GM12878 (cell line): ENCODE measurements at regions of chr1 and their contacts with region 1.

Region 1: GRCh38 chr1:54052934-54053744 is at the starts of genes TCEANC2 and TMEM59:
- DNase-seq: peak; percentile 99
- ATAC-seq: peak; percentile 95
- H3K4me3 ChIP-seq: peak within 1 kb of the TSS; percentile 92
- H3K27ac ChIP-seq: peak within 1 kb of the TSS; percentile 88
- H3K4me1 ChIP-seq: peaks cover 6% of the 10 kb centered on the region
- H3K27me3 ChIP-seq: no peaks in the 10 kb centered on the region
- CTCF ChIP-seq: no peak
- EP300 ChIP-seq: no peak
- POLR2A ChIP-seq: peak; percentile 75
- RAD21 ChIP-seq: no peak
- polyA plus RNA-seq, gene TCEANC2: 5.4 to 10.5 TPM
- polyA plus RNA-seq, gene TMEM59: 112 to 128 TPM

Region 2: GRCh38 chr1:53837924-53838652 is 215.1 kb before region 1 on chr1 and contains the start of gene NDC1:
- CTCF ChIA-PET with region 1: no interaction called
- POLR2A ChIA-PET with region 1: interaction called, 8 read pairs
- RAD21 ChIA-PET with region 1: no interaction called
- SMC1A ChIA-PET with region 1: interaction called, 4 read pairs
- in situ Hi-C with region 1: no loop called
- intact Hi-C with region 1: loop called (anchors 5 kb)
- DNase-seq: peak; percentile 91
- ATAC-seq: peak; percentile 92
- H3K4me3 ChIP-seq: peak within 1 kb of the TSS; percentile 88
- H3K27ac ChIP-seq: peak within 1 kb of the TSS; percentile 99
- H3K4me1 ChIP-seq: peaks cover 7% of the 10 kb centered on the region; the same call in 1 of the 2 replicates
- H3K27me3 ChIP-seq: no peaks in the 10 kb centered on the region
- CTCF ChIP-seq: peak; percentile 10 to 20 (median 14); a peak in 1 of 6 replicates
- EP300 ChIP-seq: peak; percentile 6 to 38; a peak in 1 of 4 replicates
- POLR2A ChIP-seq: peak; percentile 94
- RAD21 ChIP-seq: no peak
- polyA plus RNA-seq, gene NDC1: 20.2 to 24.9 TPM

Region 3: GRCh38 chr1:53889304-53890298 is 163.5 kb before region 1 on chr1 and contains the start of gene YIPF1:
- CTCF ChIA-PET with region 1: no interaction called
- POLR2A ChIA-PET with region 1: no interaction called
- RAD21 ChIA-PET with region 1: no interaction called
- SMC1A ChIA-PET with region 1: no interaction called
- in situ Hi-C with region 1: no loop called
- intact Hi-C with region 1: loop called (anchors 5 kb)
- DNase-seq: peak; percentile 48
- ATAC-seq: peak; percentile 98
- H3K4me3 ChIP-seq: peak within 1 kb of the TSS; percentile 80
- H3K27ac ChIP-seq: peak within 1 kb of the TSS; percentile 85
- H3K4me1 ChIP-seq: peaks cover 5% of the 10 kb centered on the region; the same call in 1 of the 2 replicates
- H3K27me3 ChIP-seq: no peaks in the 10 kb centered on the region
- CTCF ChIP-seq: peak in 1 of 3 experiments; percentile 7; a peak in 1 of 6 replicates
- EP300 ChIP-seq: no peak
- POLR2A ChIP-seq: peak; percentile 87
- RAD21 ChIP-seq: no peak
- polyA plus RNA-seq, gene YIPF1: 13.0 to 15.7 TPM

Region 4: GRCh38 chr1:54037476-54037875 is 15.7 kb before region 1 on chr1:
- CTCF ChIA-PET with region 1: interaction called, 10 read pairs
- POLR2A ChIA-PET with region 1: no interaction called
- RAD21 ChIA-PET with region 1: no interaction called
- SMC1A ChIA-PET with region 1: interaction called, 9 read pairs
- in situ Hi-C with region 1: no loop called
- intact Hi-C with region 1: no loop called
- DNase-seq: no peak
- ATAC-seq: no peak
- H3K4me3 ChIP-seq: no peak overlapping the region
- H3K27ac ChIP-seq: no peak overlapping the region
- H3K4me1 ChIP-seq: no peaks in the 10 kb centered on the region
- H3K27me3 ChIP-seq: no peaks in the 10 kb centered on the region
- CTCF ChIP-seq: no peak
- EP300 ChIP-seq: no peak
- POLR2A ChIP-seq: no peak
- RAD21 ChIP-seq: no peak

Region 5: GRCh38 chr1:54070171-54070837 is 17.2 kb after region 1 on chr1:
- CTCF ChIA-PET with region 1: interaction called, 18 read pairs
- POLR2A ChIA-PET with region 1: interaction called, 3 read pairs
- RAD21 ChIA-PET with region 1: interaction called, 3 read pairs
- SMC1A ChIA-PET with region 1: interaction called, 3 read pairs
- in situ Hi-C with region 1: no loop called
- intact Hi-C with region 1: no loop called
- DNase-seq: no peak
- ATAC-seq: peak; percentile 93
- H3K4me3 ChIP-seq: no peak overlapping the region
- H3K27ac ChIP-seq: no peak overlapping the region
- H3K4me1 ChIP-seq: no peaks in the 10 kb centered on the region
- H3K27me3 ChIP-seq: no peaks in the 10 kb centered on the region
- CTCF ChIP-seq: peak; percentile 59 to 97 (median 61); a peak in 4 of 6 replicates
- EP300 ChIP-seq: no peak
- POLR2A ChIP-seq: no peak
- RAD21 ChIP-seq: peak; percentile 76

Region 6: GRCh38 chr1:54081306-54082270 is 28.4 kb after region 1 on chr1:
- CTCF ChIA-PET with region 1: interaction called, 27 read pairs
- POLR2A ChIA-PET with region 1: no interaction called
- RAD21 ChIA-PET with region 1: interaction called, 5 read pairs
- SMC1A ChIA-PET with region 1: interaction called, 7 read pairs
- in situ Hi-C with region 1: no loop called
- intact Hi-C with region 1: no loop called
- DNase-seq: peak; percentile 23
- ATAC-seq: peak; percentile 100
- H3K4me3 ChIP-seq: no peak overlapping the region
- H3K27ac ChIP-seq: no peak overlapping the region
- H3K4me1 ChIP-seq: no peaks in the 10 kb centered on the region
- H3K27me3 ChIP-seq: no peaks in the 10 kb centered on the region
- CTCF ChIP-seq: peak; percentile 66 to 89 (median 82)
- EP300 ChIP-seq: no peak
- POLR2A ChIP-seq: no peak
- RAD21 ChIP-seq: peak; percentile 56

Region 7: DNA sequence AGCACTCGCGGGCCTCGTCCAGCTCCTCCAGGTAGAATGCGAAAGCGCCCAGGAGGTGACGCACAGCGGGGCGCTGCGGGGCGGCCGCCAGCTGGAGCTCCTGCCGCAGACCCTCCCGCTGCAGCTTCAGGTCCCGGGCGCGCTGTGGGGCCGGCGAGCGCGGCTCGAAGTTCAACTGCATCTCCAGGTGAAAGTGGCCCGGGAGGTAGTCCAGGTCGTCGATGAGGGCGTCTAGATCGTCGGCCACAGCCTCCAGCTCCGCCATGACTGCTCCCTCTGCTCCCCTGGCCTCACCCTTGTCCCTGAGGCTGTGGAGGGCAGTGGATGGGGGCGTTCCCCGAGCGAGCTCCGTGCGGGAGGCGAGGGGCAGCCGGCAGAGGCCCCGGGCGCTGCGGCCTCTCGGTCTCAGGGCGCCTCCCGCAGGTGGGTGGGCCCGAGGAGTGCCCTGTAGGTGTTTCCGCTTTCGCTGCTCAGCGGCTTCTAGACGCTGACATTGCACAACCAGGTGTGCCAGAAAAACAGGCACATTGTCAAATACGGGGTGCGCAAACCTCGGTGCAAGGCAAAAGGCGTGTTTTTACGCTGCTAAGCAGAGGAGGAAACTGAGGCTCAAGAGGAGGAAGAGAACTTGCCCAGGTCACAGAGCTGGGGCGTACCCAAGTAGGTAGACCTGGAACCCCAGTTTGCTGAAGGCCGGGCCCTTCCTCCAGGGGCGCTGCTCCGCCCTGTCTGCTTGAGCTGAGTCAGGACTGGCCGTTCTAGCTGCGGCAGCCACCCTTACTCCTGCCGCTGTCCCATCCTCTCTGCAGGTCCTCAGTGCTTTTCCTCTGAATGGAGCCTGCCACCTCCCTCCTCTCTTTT is 748.0 kb after region 1 on chr1 and contains the start of gene TTC22:
- CTCF ChIA-PET with region 1: interaction called, 3 read pairs
- POLR2A ChIA-PET with region 1: no interaction called
- RAD21 ChIA-PET with region 1: no interaction called
- SMC1A ChIA-PET with region 1: no interaction called
- in situ Hi-C with region 1: no loop called
- intact Hi-C with region 1: loop called (anchors 5 kb)
- DNase-seq: peak; percentile 35
- ATAC-seq: peak; percentile 87
- H3K4me3 ChIP-seq: peak within 1 kb of the TSS; percentile 72
- H3K27ac ChIP-seq: no peak within 1 kb of the TSS; the same call in 1 of the 2 replicates
- H3K4me1 ChIP-seq: peaks cover 37% of the 10 kb centered on the region
- H3K27me3 ChIP-seq: no peaks in the 10 kb centered on the region
- CTCF ChIP-seq: peak; percentile 63 to 78 (median 74)
- EP300 ChIP-seq: no peak
- POLR2A ChIP-seq: peak; percentile 76
- RAD21 ChIP-seq: peak; percentile 55
- polyA plus RNA-seq, gene TTC22: 0.64 to 0.89 TPM